ENCODE measurements at regions of chr2 and their contacts with region 1.

Region 1: GRCh38 chr2:69914170-69914960 is 544 bp upstream of the MXD1 start:
- DNase-seq: peak; percentile 100
- ATAC-seq: peak; percentile 94 to 96

Region 2: DNA sequence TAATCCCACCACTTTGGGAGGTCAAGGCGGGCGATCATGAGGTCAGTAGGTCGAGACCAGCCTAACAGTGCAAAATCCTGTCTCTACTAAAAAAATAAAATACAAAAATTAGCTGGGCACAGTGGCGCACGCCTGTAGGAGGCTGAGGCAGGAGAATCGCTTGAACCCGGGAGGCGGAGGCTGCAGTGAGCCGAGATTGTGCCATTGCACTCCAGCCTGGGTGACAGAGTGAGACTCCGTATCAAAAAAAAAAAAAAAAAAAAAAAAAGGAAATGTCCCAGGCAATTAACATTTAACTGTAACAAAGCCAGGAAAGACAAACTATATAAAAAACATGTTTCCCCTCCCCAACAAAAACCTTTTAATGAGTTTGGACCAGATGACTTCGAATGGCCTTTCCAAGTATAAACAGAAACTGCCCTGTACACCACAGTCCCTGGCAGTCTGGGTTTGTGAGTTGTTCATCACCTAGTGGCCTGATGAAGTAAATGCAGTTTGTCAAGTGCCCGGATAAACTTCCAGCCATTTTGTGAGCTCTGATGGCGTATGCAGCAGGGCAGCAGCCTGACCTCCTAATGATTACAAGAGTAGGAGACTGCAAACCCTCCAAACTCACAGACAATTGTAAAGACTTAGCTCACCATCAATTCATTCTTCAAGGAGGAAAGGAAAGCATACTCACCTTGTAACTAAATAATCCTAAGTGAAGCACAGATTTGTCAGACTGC is 156.3 kb after region 1 on chr2:
- intact Hi-C with region 1: loop called in 1 of 2 experiments (anchors 5 kb)
- DNase-seq: peak; percentile 53
- ATAC-seq: peak; percentile 95 to 97

Region 3: GRCh38 chr2:70086838-70087701 is 172.7 kb after region 1 on chr2 and contains the start of gene PCBP1:
- intact Hi-C with region 1: loop called (anchors 5 kb)
- DNase-seq: peak; percentile 97
- ATAC-seq: peak; percentile 86 to 91
- total RNA-seq, gene PCBP1: 230 to 248 TPM

Region 4: GRCh38 chr2:70301344-70302194 is 387.2 kb after region 1 on chr2 and contains the start of gene FAM136A:
- intact Hi-C with region 1: loop called in 1 of 2 experiments (anchors 5 kb)
- DNase-seq: peak; percentile 89
- ATAC-seq: peak; percentile 96
- total RNA-seq, gene FAM136A: 25.3 to 28.9 TPM

Measured in left cardiac atrium (tissue), 4 donors.